Mammary epithelial cell (primary cell): ENCODE measurements at regions of chr1 and their contacts with region 1.

Region 1: GRCh38 chr1:116288201-116288761 is 84.8 kb upstream of the ATP1A1 start:
- DNase-seq: no peak
- H3K4me3 ChIP-seq: no peak overlapping the region
- H3K27ac ChIP-seq: no peak overlapping the region
- H3K4me1 ChIP-seq: peaks cover 41% of the 10 kb centered on the region
- H3K27me3 ChIP-seq: no peaks in the 10 kb centered on the region
- CTCF ChIP-seq: no peak

Region 2: DNA sequence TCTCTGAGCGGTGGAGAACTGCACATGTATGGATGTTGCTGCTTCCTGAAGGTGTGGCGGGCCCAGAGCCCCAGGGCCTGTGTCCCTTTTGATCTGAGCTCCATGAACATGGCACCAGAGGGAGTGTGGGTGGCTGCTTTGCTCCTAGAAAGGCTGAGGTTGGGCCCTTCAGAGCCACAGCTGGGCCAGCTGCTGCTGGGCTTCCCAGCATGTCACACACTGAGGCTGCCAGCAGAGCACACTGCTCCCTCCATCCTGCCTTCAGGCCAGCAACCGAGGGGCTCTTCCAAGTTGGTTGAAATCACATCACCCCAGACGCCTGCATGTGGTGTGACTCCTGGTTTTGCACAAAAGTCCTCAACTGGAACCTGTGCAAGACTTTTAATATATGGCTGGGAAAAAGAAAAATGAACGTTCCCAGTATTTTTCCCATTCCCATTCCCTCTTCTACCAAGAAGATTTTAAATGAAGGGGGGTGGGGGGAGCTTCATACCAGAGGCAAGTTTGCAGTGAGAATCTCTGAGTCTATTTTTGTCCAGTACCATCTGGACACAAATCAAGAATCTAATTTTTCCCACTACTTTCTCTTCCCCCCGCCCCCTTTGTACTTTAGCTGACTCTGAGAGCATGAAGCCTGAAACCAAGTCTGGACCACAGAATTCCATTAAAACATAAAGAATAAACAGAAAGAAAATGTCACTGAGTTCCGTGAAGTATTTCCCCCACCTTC is 924.1 kb before region 1 on chr1:
- CTCF ChIA-PET with region 1: no interaction called
- dilution Hi-C with region 1: no loop called
- in situ Hi-C with region 1: no loop called
- intact Hi-C with region 1: no loop called
- DNase-seq: no peak
- H3K4me3 ChIP-seq: no peak overlapping the region
- H3K27ac ChIP-seq: no peak overlapping the region
- H3K4me1 ChIP-seq: no peaks in the 10 kb centered on the region
- H3K27me3 ChIP-seq: no peaks in the 10 kb centered on the region
- CTCF ChIP-seq: no peak

Region 3: DNA sequence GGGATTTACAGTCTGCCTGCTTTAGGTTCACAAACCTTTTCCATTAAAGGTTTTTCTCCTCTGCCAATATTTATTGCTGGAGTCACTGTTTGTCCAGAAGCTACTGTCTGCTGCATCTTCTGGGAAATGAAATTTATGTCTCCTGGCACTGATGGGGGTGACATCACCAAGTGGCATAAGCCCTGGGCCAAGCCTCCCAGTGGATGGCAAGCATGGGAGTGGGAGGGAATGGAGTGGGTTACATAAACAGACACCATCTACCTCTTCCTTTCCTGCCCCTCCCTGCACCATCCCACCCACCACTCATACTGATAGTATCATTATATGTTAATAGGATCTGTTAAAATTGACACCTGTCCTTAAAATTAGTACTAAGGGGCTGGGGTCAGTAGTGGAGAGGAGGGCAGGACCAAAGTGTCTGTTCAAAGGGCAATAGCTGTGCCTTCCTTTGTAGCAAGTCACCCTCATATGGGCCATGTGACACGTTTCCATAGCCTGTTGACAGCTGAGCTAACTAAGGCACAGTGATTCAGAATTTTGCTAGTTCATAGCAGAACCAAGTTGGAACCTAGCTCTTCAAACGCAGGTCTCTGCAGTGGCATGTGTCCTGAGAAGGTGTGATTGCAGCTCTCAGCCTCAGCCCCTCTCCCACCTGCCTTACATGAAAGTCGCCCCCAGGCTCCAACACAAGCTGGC is 106.1 kb before region 1 on chr1:
- CTCF ChIA-PET with region 1: no interaction called
- dilution Hi-C with region 1: loop called (anchors 5 kb)
- in situ Hi-C with region 1: no loop called
- intact Hi-C with region 1: no loop called
- DNase-seq: no peak
- H3K4me3 ChIP-seq: no peak overlapping the region
- H3K27ac ChIP-seq: no peak overlapping the region
- H3K4me1 ChIP-seq: no peaks in the 10 kb centered on the region
- H3K27me3 ChIP-seq: no peaks in the 10 kb centered on the region
- CTCF ChIP-seq: no peak

Region 4: GRCh38 chr1:116325922-116326321 is 37.6 kb after region 1 on chr1:
- CTCF ChIA-PET with region 1: no interaction called
- dilution Hi-C with region 1: loop called (anchors 5 kb)
- in situ Hi-C with region 1: no loop called
- intact Hi-C with region 1: no loop called
- DNase-seq: no peak
- H3K4me3 ChIP-seq: no peak overlapping the region
- H3K27ac ChIP-seq: no peak overlapping the region
- H3K4me1 ChIP-seq: no peaks in the 10 kb centered on the region
- H3K27me3 ChIP-seq: no peaks in the 10 kb centered on the region
- CTCF ChIP-seq: no peak